OCI-LY7 (cell line): ENCODE measurements at regions of chrX and their contacts with region 1.

Region 1: GRCh38 chrX:20060961-20061748 is 55.6 kb downstream of the MAP7D2 start:
- DNase-seq: peak; percentile 88
- H3K4me3 ChIP-seq: peak overlapping the region; percentile 22
- H3K27ac ChIP-seq: peak overlapping the region; percentile 63
- H3K4me1 ChIP-seq: peaks cover 33% of the 10 kb centered on the region
- CTCF ChIP-seq: 0 out of 2 replicates have a peak, but pooled peaks have one; percentile 41

Region 2: DNA sequence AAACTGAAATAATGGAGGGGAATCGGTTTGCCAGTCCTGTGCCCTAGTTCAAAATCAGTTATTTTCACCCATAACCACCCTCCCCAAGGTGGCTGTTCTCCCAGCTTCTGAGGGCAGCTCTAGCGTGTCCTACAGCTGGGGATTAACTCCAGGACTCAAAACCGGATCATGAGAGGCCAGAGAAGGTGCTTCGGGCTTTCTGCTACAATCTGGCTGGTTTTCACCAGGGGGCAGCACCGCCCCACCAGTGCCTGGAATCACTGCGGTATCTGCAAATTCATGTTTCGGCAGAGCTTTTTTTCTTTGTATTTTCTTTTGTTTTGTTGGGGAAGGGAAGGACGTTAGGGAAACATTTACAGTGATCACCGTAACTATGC is 689.0 kb before region 1 on chrX:
- CTCF ChIA-PET with region 1: no interaction called
- POLR2A ChIA-PET with region 1: interaction called, 3 read pairs
- intact Hi-C with region 1: loop called (anchors 5 kb)
- DNase-seq: peak; percentile 58
- H3K4me3 ChIP-seq: no peak overlapping the region
- H3K27ac ChIP-seq: no peak overlapping the region
- H3K4me1 ChIP-seq: peaks cover 6% of the 10 kb centered on the region
- CTCF ChIP-seq: peak; percentile 79

Region 3: GRCh38 chrX:19990556-19991349 is 70.4 kb before region 1 on chrX and contains the start of gene BCLAF3:
- CTCF ChIA-PET with region 1: no interaction called
- POLR2A ChIA-PET with region 1: interaction called, 3 read pairs
- intact Hi-C with region 1: loop called (anchors 2 kb)
- DNase-seq: peak; percentile 91
- H3K4me3 ChIP-seq: peak within 1 kb of the TSS; percentile 82
- H3K27ac ChIP-seq: no peak within 1 kb of the TSS
- H3K4me1 ChIP-seq: peaks cover 18% of the 10 kb centered on the region
- CTCF ChIP-seq: peak; percentile 75
- total RNA-seq, gene BCLAF3: 5.1 and 5.8 TPM in 2 replicates

Region 4: GRCh38 chrX:20189171-20189570 is 128.0 kb after region 1 on chrX:
- CTCF ChIA-PET with region 1: no interaction called
- POLR2A ChIA-PET with region 1: no interaction called
- intact Hi-C with region 1: no loop called
- DNase-seq: no peak
- H3K4me3 ChIP-seq: no peak overlapping the region
- H3K27ac ChIP-seq: no peak overlapping the region
- H3K4me1 ChIP-seq: no peaks in the 10 kb centered on the region
- CTCF ChIP-seq: no peak